Activated CD4-positive, alpha-beta memory T cell treated with anti-CD3 and anti-CD28 coated beads for 36 hours (primary cell): ENCODE measurements at regions of chr1 and their contacts with region 1.

Region 1: DNA sequence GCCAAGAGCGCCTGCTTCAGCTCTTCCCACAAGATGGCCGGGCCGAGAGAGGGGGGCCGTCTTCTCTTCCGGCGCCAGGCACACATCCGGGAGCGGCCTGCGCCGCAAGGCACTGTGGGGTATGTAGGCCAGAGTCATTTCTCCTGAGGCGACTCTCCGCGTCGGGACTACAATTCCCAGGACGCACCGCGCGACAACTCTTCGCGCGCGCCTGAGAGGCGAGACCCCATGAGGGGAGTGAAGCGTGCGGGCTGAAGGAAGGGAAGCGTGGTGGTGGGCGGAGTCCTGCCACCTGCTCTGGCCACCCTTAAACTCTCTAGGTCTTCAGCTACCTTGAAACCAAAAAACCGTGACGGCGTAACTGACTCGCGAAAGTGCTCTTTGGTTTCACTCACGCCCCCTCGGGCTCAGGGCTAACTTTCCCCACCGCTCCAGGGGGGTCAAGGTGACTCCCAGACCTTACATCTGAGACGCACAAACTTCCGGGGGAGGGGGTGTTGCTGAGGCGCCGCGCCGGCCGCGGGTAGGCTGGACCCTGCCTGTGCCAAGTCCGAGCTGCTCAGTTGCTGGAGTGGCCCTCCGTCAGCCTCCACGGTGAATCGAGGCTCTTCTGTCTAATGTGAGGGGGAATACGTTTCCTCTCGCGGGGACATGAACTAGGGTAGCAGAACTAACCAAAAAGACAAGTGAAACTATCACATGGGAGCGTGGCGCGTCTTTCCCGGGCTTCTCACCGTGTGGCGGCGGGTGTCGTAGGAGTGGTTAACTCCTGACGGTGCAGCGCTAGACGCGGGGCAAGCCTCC is at the start of gene SERBP1:
- DNase-seq: peak; percentile 97
- H3K4me3 Mint-ChIP-seq: peak within 1 kb of the TSS; percentile 83
- H3K27ac Mint-ChIP-seq: peak within 1 kb of the TSS; percentile 97
- H3K4me1 Mint-ChIP-seq: peaks cover 50% of the 10 kb centered on the region
- H3K27me3 Mint-ChIP-seq: no peaks in the 10 kb centered on the region
- total RNA-seq, gene SERBP1: 388 to 398 TPM

Region 2: GRCh38 chr1:66981679-66982078 is 448.9 kb before region 1 on chr1:
- CTCF ChIA-PET with region 1: no interaction called
- POLR2A ChIA-PET with region 1: no interaction called
- intact Hi-C with region 1: loop called (anchors 10 kb)
- DNase-seq: peak; percentile 47
- H3K4me3 Mint-ChIP-seq: peak overlapping the region; percentile 53
- H3K27ac Mint-ChIP-seq: peak overlapping the region; percentile 72
- H3K4me1 Mint-ChIP-seq: peaks cover 42% of the 10 kb centered on the region
- H3K27me3 Mint-ChIP-seq: no peaks in the 10 kb centered on the region

Region 3: GRCh38 chr1:67162957-67163356 is 267.6 kb before region 1 on chr1:
- CTCF ChIA-PET with region 1: interaction called, 3 read pairs
- POLR2A ChIA-PET with region 1: interaction called, 19 read pairs
- intact Hi-C with region 1: no loop called
- DNase-seq: peak; percentile 78
- H3K4me3 Mint-ChIP-seq: peak overlapping the region; percentile 30
- H3K27ac Mint-ChIP-seq: peak overlapping the region; percentile 73
- H3K4me1 Mint-ChIP-seq: peaks cover 56% of the 10 kb centered on the region
- H3K27me3 Mint-ChIP-seq: peaks cover 5% of the 10 kb centered on the region

Region 4: GRCh38 chr1:67307251-67308060 is 123.1 kb before region 1 on chr1 and contains the start of gene IL12RB2:
- CTCF ChIA-PET with region 1: no interaction called
- POLR2A ChIA-PET with region 1: interaction called, 4 read pairs
- intact Hi-C with region 1: loop called (anchors 2 kb)
- DNase-seq: peak; percentile 75
- H3K4me3 Mint-ChIP-seq: peak within 1 kb of the TSS; percentile 95
- H3K27ac Mint-ChIP-seq: peak within 1 kb of the TSS; percentile 96
- H3K4me1 Mint-ChIP-seq: peaks cover 52% of the 10 kb centered on the region
- H3K27me3 Mint-ChIP-seq: peaks cover 2% of the 10 kb centered on the region
- total RNA-seq, gene IL12RB2: 86.9 to 90.7 TPM

Region 5: DNA sequence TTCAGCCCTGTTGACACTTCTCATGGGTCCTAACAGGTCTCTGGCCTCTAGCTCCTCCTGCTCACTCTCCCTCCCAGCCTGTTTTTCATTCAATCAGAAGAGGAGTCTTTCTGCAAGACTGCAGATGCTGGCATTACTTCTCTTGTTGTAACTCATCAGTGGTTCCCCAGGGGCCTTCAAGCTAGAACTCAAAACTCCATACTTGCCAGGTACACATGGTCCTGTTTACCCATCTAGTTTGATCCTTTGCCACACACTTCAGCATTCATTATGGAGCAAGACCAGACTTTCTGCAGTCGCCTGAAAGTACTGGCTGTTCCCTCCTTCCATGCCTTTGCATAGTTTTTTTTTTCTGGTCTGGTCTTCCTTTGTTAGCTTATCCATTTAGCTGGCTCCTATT is 48.3 kb before region 1 on chr1:
- CTCF ChIA-PET with region 1: no interaction called
- POLR2A ChIA-PET with region 1: no interaction called
- intact Hi-C with region 1: no loop called
- DNase-seq: no peak
- H3K4me3 Mint-ChIP-seq: no peak overlapping the region
- H3K27ac Mint-ChIP-seq: no peak overlapping the region
- H3K4me1 Mint-ChIP-seq: no peaks in the 10 kb centered on the region
- H3K27me3 Mint-ChIP-seq: no peaks in the 10 kb centered on the region

Region 6: DNA sequence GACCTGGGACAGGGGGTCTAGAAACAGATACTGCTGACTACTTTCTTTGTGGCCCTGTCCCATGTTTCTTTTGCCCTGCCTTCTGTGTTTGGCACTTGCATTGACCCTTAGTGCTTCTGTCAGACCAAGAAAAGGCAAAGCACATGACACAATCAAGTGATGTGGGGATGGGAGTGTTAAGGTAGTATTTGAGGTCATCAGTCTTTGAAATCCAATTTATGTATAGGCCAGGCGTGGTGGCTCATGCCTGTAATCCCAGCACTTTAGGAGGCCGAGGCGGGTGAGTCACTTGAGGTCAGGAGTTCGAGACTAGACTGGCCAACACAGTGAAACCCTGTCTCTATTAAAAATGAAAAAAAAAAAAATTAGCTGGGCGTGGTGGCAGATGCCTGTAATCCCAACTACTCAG is 26.3 kb before region 1 on chr1:
- CTCF ChIA-PET with region 1: no interaction called
- POLR2A ChIA-PET with region 1: interaction called, 10 read pairs
- intact Hi-C with region 1: loop called (anchors 1 kb)
- DNase-seq: no peak
- H3K4me3 Mint-ChIP-seq: no peak overlapping the region
- H3K27ac Mint-ChIP-seq: no peak overlapping the region
- H3K4me1 Mint-ChIP-seq: peaks cover 14% of the 10 kb centered on the region
- H3K27me3 Mint-ChIP-seq: no peaks in the 10 kb centered on the region

Region 7: DNA sequence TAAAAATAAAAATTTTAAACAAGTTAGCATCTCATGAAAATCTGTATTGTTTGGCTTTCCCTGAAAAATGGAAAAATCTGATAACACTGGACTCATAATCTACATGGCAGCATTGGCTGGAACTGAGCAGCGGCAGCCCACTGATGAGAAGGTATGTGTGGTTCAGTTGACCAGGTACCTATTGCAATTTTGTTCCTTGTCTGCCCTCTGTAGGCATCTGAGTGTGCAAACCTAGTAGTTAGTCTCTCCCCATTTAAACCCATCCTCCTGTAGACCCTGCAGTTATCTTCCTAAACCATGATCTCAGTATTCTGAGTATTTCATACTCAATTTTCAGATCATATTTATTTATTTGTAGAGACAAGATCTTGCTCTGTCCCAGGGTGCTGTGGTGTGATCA is 59.1 kb after region 1 on chr1:
- CTCF ChIA-PET with region 1: no interaction called
- POLR2A ChIA-PET with region 1: no interaction called
- intact Hi-C with region 1: loop called (anchors 5 kb)
- DNase-seq: peak; percentile 12
- H3K4me3 Mint-ChIP-seq: no peak overlapping the region
- H3K27ac Mint-ChIP-seq: no peak overlapping the region
- H3K4me1 Mint-ChIP-seq: peaks cover under 1% of the 10 kb centered on the region
- H3K27me3 Mint-ChIP-seq: no peaks in the 10 kb centered on the region

Region 8: DNA sequence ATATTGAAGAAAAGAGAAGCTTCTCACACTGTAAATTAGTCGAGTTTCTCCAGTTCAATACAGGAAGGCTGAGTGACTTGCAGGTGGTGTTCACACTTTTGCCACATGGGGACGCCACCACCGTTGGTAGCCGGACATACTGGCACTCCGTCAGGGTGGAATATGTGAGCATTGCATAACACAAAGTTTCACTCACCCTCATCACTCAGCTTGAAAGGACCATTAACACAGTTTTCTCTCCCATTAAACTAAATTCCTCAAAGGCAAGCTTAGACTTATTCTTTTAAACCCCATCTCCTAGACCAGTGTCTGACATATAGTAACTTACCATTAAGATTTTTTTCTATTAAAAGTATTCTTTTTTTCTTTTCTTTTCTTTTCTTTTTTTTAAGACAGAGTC is 104.9 kb after region 1 on chr1:
- CTCF ChIA-PET with region 1: no interaction called
- POLR2A ChIA-PET with region 1: no interaction called
- intact Hi-C with region 1: no loop called
- DNase-seq: peak; percentile 79
- H3K4me3 Mint-ChIP-seq: no peak overlapping the region
- H3K27ac Mint-ChIP-seq: no peak overlapping the region
- H3K4me1 Mint-ChIP-seq: no peaks in the 10 kb centered on the region
- H3K27me3 Mint-ChIP-seq: peaks cover 4% of the 10 kb centered on the region

Region 9: DNA sequence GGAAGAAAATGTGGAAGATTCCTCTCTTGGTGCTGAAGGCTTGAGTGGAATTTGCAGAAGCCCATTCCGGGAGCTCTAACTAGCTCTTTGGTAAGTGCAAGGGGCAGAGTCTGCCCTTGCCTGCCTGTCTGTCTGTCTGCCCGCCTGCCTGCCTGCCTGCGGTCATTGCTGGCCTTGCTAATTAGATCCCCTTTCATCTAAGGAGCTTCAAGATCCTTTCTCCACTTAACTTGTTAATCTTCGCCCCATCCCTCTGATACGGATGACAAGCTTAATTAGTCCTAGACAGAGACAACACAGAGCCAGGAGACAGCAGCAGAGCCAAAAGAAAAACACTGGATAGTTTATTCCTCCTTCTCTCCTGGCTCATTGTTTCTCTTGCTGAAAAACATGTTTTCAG is 174.2 kb after region 1 on chr1:
- CTCF ChIA-PET with region 1: no interaction called
- POLR2A ChIA-PET with region 1: no interaction called
- intact Hi-C with region 1: no loop called
- DNase-seq: no peak
- H3K4me3 Mint-ChIP-seq: no peak overlapping the region
- H3K27ac Mint-ChIP-seq: no peak overlapping the region
- H3K4me1 Mint-ChIP-seq: peaks cover 6% of the 10 kb centered on the region
- H3K27me3 Mint-ChIP-seq: peaks cover 7% of the 10 kb centered on the region

Region 10: GRCh38 chr1:67618285-67619018 is 187.9 kb after region 1 on chr1:
- CTCF ChIA-PET with region 1: no interaction called
- POLR2A ChIA-PET with region 1: no interaction called
- intact Hi-C with region 1: no loop called
- DNase-seq: no peak
- H3K4me3 Mint-ChIP-seq: no peak overlapping the region
- H3K27ac Mint-ChIP-seq: no peak overlapping the region
- H3K4me1 Mint-ChIP-seq: no peaks in the 10 kb centered on the region
- H3K27me3 Mint-ChIP-seq: peaks cover 19% of the 10 kb centered on the region